ENCODE measurements at regions of chr4 and their contacts with region 1.

Region 1: GRCh38 chr4:156963419-156963818 is 8.2 kb downstream of the PDGFC start:
- DNase-seq: no peak
- H3K4me3 ChIP-seq: no peak overlapping the region
- H3K27me3 ChIP-seq: no peaks in the 10 kb centered on the region
- CTCF ChIP-seq: no peak

Region 2: GRCh38 chr4:156362581-156362980 is 600.8 kb before region 1 on chr4:
- CTCF ChIA-PET with region 1: no interaction called
- POLR2A ChIA-PET with region 1: interaction called, 17 read pairs
- DNase-seq: peak; percentile 15
- H3K4me3 ChIP-seq: no peak overlapping the region
- H3K27me3 ChIP-seq: no peaks in the 10 kb centered on the region
- CTCF ChIP-seq: no peak

Region 3: DNA sequence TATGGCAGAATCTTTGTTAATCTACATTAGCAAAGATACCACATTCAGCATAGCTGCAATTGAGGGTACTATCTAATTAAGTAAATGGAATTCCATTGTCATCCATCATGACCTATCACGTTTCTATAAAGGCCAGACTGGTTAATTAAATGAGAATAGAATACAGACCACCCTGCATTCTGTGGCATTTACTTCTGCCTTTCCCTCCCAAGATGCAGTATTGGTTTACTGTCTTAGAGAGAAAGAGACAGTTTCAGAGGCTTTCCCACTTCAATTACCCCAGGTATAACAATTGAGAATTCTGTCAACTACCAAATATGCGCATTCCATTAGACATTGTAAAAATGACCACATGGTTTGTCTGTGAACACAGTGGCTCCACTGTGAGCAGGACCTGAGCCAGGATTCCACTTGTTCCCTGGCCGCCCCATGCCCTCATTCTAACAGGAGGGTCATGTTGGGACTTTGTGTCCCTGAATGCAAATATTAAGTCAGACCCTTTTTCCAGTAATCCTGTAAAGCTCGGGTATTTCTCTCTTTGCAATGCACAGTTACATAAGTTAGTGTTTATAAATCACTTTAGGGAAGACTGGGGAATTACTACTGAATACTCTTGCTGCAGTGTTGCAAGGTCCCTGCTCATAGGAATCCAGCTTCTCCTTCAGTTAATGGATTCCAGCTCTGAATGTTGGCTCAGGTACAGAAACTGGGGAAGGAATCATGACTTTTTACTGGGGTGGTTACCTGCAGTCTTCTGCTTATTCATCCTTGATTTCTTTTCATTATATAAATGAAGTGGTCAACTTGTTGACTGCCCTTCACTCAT is 252.8 kb before region 1 on chr4:
- CTCF ChIA-PET with region 1: no interaction called
- POLR2A ChIA-PET with region 1: no interaction called
- DNase-seq: peak; percentile 37
- H3K4me3 ChIP-seq: no peak overlapping the region
- H3K27me3 ChIP-seq: no peaks in the 10 kb centered on the region
- CTCF ChIP-seq: no peak

Measured in BJ (cell line).